ENCODE measurements at regions of chr2 and their contacts with region 1.

Region 1: GRCh38 chr2:160493227-160494028 is at the start of gene RBMS1:
- DNase-seq: peak in 1 of 2 donors; percentile 77
- H3K4me3 ChIP-seq: peak within 1 kb of the TSS; percentile 87 to 93
- H3K27ac ChIP-seq: peak within 1 kb of the TSS; percentile 94 to 96
- H3K4me1 ChIP-seq: peaks cover 8 to 11% of the 10 kb centered on the region in 2 donors
- H3K27me3 ChIP-seq: no peaks in the 10 kb centered on the region
- CTCF ChIP-seq: no peak
- total RNA-seq, gene RBMS1: 51.1 TPM

Region 2: DNA sequence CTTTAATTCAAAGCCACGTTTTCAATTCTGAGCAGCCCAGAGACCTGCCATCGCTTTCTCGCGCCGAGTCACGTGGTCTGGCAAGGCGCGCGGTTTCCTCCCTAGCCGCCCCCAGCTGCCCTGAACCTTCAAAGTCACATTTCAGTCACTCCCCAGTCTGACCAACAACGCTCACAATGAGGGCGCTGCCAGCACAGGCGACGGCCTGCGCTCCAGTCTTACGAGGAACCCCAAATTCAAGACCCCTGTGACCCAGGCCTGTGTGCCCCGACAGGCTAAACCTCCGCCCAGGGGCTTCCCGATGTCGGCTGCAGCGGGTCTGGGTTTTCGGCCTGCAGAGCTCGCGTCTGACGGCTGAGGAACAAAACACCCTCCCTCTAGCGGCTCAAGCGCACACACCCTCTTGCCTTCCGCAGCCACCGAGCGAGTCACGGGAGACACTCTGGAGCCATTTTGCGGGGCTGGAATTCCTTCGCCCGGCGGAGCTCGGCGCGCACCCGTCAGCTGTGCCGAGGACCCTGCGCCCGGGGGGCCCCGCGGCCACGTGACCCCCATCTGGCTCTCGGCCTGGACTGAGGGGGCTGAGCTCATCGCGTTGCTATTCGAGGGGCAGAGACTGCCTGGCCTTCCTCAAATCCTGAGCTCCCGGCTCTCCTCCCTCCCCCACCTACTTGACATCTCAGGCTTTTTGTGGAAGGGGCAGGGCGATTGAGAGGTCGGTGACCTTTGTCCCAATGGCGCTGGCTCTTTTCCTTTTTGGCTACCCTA is 223.4 kb before region 1 on chr2:
- intact Hi-C with region 1: loop called (anchors 10 kb)
- DNase-seq: peak; percentile 60 to 96
- H3K4me3 ChIP-seq: peak overlapping the region; percentile 43 to 68
- H3K27ac ChIP-seq: peak overlapping the region; percentile 96 to 98
- H3K4me1 ChIP-seq: peaks cover 0 to 29% of the 10 kb centered on the region in 2 donors
- H3K27me3 ChIP-seq: no peaks in the 10 kb centered on the region
- CTCF ChIP-seq: peak; percentile 60 to 83 (median 67)

Region 3: DNA sequence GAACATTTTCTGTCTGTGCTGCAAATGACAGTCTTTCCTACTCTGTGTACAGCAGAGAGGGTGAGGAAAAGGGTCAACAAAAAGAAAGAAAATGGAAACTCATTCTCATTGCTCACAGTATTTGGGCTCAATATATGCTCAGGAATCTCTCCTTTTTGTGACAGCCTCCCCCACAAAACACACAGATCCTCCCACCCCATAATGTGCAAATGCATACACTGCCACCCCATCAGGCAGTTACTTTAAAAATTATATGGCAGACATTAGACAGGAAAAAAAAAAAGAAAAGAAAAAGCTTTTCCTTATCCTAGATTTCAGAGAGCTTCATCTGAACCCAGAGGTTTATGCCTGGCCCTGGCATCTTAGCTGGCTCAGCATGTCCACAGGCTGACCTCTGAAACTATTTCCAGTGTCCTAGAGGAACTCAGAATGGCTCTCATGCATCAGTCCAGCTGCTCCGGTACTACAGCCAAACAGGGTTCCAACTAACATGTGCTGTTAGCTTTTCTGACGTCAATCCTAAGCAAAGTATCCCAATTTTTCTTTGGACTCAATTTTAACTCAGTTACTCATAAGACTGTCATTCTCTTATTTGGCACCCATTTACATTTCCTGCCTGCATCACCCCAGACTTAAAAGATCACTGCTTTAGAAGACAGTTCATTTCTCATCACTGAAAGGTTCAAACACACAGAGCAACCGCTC is 105.7 kb before region 1 on chr2:
- intact Hi-C with region 1: loop called (anchors 5 kb)
- DNase-seq: peak; percentile 65 to 93
- H3K4me3 ChIP-seq: peak overlapping the region in 1 of 2 donors; percentile 1
- H3K27ac ChIP-seq: peak overlapping the region; percentile 83 to 93
- H3K4me1 ChIP-seq: peaks cover 13 to 48% of the 10 kb centered on the region in 2 donors
- H3K27me3 ChIP-seq: no peaks in the 10 kb centered on the region
- CTCF ChIP-seq: no peak

Region 4: DNA sequence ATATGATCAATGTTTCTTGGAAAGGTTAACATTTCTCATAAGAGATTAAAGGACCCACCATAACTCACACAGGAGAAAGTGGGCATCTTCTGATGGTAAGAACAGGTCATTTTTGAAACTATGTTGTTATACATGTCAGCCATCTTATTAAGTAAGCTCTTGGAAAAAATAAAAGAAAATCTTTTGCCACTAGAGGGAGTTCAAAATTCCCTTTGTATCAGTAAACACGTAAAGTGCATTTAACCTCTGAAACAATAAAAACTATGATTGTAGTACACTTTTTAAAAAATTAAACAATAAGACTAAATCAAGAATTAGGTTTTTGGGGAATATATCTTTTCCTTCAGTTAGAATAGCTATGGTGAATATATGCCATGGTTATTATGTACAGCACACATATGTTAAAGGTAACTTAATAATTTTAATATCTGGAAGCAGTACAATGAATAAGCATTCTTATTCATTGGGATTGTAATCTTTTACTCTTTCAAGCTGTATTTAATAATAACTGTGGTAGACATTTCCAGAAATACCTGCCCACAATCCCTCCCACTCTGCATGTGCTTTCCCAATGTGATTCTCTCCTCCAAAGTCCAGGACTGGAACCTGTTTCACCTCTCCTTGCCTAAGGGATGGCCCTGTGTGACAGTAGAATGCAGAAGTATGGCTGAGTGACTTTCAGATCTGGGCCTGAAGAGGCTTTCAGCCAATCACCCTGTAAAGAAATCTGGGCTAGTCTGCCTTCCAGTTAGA is 64.0 kb before region 1 on chr2:
- intact Hi-C with region 1: loop called (anchors 5 kb)
- DNase-seq: no peak
- H3K4me3 ChIP-seq: no peak overlapping the region
- H3K27ac ChIP-seq: peak overlapping the region; percentile 77 to 89
- H3K4me1 ChIP-seq: peaks cover 5 to 28% of the 10 kb centered on the region in 2 donors
- H3K27me3 ChIP-seq: no peaks in the 10 kb centered on the region
- CTCF ChIP-seq: peak; percentile 45 to 57 (median 55)

Region 5: GRCh38 chr2:160666154-160667060 is 173.0 kb after region 1 on chr2:
- intact Hi-C with region 1: loop called (anchors 5 kb)
- DNase-seq: no peak
- H3K4me3 ChIP-seq: peak overlapping the region in 1 of 2 donors; percentile 31
- H3K27ac ChIP-seq: peak overlapping the region; percentile 58 to 78
- H3K4me1 ChIP-seq: peaks cover 0 to 18% of the 10 kb centered on the region in 2 donors
- H3K27me3 ChIP-seq: no peaks in the 10 kb centered on the region
- CTCF ChIP-seq: no peak